Posterior cingulate gyrus (tissue), 11 donors: ENCODE measurements at regions of chr6 and their contacts with region 1.

Region 1: DNA sequence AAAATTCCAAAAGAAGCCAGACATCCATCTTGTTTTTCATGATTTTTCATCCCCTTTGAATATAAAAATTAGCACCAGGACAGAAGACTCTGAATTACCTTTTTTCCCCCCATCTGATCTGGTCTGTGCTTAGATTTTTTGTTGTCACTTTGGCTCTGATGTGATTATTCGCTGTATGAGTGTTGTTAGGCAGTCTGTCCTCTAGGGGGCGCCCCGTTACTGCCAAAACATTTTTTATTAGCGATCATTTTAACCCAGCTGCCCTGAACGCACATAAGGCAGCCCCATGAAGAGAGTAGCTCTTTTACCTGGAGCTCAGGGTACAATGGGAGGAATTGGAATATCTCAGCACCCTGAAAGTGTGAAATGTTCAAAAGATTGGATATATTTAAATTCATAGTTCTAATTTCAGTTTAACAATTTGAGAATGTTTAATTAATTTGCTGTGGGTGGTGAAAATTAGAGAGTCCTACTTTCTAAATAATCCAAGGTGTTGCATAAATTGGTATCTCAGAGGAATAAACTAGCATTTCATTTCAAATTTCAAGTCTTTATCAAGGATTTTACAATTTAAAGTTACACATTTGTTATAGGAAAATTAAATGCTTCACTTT is 60.8 kb downstream of the PRPH2 start:
- DNase-seq: peak; percentile 43 to 94 (median 78)

Region 2: GRCh38 chr6:42177514-42178364 is 483.9 kb before region 1 on chr6:
- intact Hi-C with region 1: no loop called
- DNase-seq: no peak

Region 3: DNA sequence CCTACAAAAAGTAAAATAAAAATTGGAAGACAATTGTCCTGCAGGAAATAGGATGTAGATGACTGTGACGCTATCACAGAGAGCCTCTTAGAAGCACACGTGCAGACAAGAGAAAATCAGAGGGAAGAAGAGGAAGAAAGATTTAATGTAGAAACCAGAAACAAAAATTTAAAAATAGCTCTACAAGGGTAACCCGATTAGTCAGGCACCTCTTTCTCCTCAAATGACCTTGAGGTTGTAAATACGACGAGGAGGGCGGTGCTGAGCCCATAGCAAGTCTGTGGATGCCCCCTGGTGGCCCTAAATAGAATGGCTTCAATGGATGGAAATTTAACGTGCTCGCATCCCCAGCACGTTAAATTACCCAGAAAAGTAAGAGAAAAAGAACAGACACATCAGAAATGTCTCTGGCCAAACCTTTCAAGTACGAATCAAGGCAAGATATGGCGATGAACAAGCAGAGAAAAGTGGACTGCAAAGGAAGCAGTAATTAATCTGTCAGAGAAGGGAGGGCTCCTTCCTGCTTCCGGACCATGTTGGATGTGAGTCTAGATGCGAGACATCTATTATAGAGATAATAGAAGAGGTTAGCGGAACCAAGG is 64.9 kb after region 1 on chr6:
- intact Hi-C with region 1: loop called (anchors 2 kb)
- DNase-seq: peak in 9 of 10 donors; percentile 22 to 92 (median 61)

Region 4: GRCh38 chr6:42879372-42880239 is 218.0 kb after region 1 on chr6 and contains the start of gene RPL7L1:
- intact Hi-C with region 1: loop called (anchors 1 kb)
- DNase-seq: peak; percentile 82 to 98 (median 88)

Region 5: GRCh38 chr6:42901536-42901957 is 239.9 kb after region 1 on chr6:
- intact Hi-C with region 1: loop called (anchors 5 kb)
- DNase-seq: peak in 8 of 10 donors; percentile 53 to 94 (median 68)

Region 6: GRCh38 chr6:43181942-43182860 is 520.6 kb after region 1 on chr6 and contains the start of gene CUL9:
- intact Hi-C with region 1: no loop called
- DNase-seq: peak; percentile 85 to 98 (median 86)